GM12878 (cell line): ENCODE measurements at regions of chr2 and their contacts with region 1.

Region 1: GRCh38 chr2:111897924-111898702 is at the start of gene MERTK:
- DNase-seq: no peak
- ATAC-seq: peak; percentile 85
- H3K4me3 ChIP-seq: peak within 1 kb of the TSS; percentile 61; the same call in 1 of the 2 replicates
- H3K27ac ChIP-seq: no peak within 1 kb of the TSS
- H3K4me1 ChIP-seq: no peaks in the 10 kb centered on the region
- H3K27me3 ChIP-seq: peaks cover 2 to 7% of the 10 kb centered on the region in 2 experiments; a peak in 1 of 4 replicates
- CTCF ChIP-seq: peak; percentile 33 to 69 (median 40); a peak in 5 of 6 replicates
- EP300 ChIP-seq: no peak
- POLR2A ChIP-seq: no peak; the same call in 1 of the 2 replicates
- RAD21 ChIP-seq: peak; percentile 52
- polyA plus RNA-seq, gene MERTK: 0.26 to 0.37 TPM

Region 2: GRCh38 chr2:111883661-111884591 is 14.2 kb before region 1 on chr2 and contains the start of gene ANAPC1:
- CTCF ChIA-PET with region 1: interaction called, 93 read pairs
- POLR2A ChIA-PET with region 1: interaction called, 4 read pairs
- RAD21 ChIA-PET with region 1: interaction called, 12 read pairs
- SMC1A ChIA-PET with region 1: interaction called, 11 read pairs
- in situ Hi-C with region 1: no loop called
- intact Hi-C with region 1: no loop called
- DNase-seq: peak; percentile 67
- ATAC-seq: peak; percentile 95
- H3K4me3 ChIP-seq: peak within 1 kb of the TSS; percentile 97
- H3K27ac ChIP-seq: peak within 1 kb of the TSS; percentile 90
- H3K4me1 ChIP-seq: no peaks in the 10 kb centered on the region; the same call in 1 of the 2 replicates
- H3K27me3 ChIP-seq: no peaks in the 10 kb centered on the region
- CTCF ChIP-seq: no peak
- EP300 ChIP-seq: no peak
- POLR2A ChIP-seq: peak; percentile 98
- RAD21 ChIP-seq: no peak
- polyA plus RNA-seq, gene ANAPC1: 10.0 to 11.8 TPM

Region 3: DNA sequence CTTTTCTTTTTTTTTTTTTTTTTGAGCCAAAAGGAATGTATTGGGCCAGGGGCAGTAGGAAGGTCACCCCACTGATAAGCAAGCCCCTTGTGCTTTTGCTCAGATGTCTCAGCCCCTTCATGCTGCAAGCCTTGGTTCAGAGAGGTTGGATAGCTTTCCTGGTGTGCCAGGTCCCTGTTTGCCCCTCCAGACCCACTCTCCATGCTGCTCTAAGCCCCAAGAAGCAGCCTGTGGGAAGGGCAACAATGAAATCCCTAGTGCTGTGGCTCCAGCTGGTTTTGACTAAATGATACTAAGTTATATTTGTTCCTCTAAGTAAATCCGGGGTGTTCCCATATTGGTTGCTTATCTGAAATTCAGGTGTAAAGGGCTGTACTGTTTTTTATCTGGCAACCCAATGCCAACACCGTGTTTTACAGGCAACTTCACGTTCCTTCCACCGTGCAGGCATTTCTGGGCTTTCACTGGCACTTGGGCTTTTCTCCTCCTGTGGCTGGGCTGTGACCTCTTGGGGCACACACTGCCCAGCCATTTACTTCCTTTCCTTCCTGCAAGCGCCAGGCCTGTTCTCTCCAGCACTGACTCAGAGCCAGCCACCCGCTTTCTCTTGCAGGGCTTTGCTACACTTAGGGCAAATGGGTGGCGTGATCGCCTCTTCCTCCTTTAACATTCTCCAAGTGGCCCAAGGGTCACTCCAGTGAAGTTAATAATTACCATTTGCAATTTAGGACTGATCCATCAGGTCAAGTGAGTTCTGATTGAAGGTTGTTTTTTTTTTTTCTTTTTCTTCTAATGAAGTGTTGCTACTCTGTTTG is 21.9 kb after region 1 on chr2:
- CTCF ChIA-PET with region 1: interaction called, 33 read pairs
- POLR2A ChIA-PET with region 1: interaction called, 6 read pairs
- RAD21 ChIA-PET with region 1: interaction called, 9 read pairs
- SMC1A ChIA-PET with region 1: interaction called, 6 read pairs
- in situ Hi-C with region 1: no loop called
- intact Hi-C with region 1: no loop called
- DNase-seq: no peak
- ATAC-seq: 0 out of 3 replicates have a peak, but pooled peaks have one; percentile 25
- H3K4me3 ChIP-seq: no peak overlapping the region
- H3K27ac ChIP-seq: no peak overlapping the region
- H3K4me1 ChIP-seq: no peaks in the 10 kb centered on the region
- H3K27me3 ChIP-seq: no peaks in the 10 kb centered on the region; a peak in 1 of 4 replicates
- CTCF ChIP-seq: no peak
- EP300 ChIP-seq: no peak
- POLR2A ChIP-seq: no peak
- RAD21 ChIP-seq: no peak

Region 4: DNA sequence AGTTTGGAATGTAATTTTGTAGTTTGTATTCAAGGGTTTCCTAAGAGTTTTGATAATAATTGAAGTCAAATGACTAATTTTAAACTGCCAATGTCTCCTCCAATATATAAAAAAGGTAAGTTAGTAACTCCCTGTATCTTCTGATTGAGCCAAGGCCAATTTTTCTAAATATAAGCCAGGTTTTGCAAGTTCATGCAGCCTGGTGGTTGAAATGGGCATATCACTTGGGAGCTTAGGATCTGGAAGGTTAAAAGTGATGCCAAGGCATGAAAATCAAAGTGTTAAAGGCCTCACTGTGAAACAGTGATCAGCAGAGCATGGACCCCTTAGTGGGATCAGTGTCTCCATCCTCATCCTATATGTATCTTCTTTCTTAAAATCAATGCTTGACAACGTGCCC is 60.8 kb after region 1 on chr2:
- CTCF ChIA-PET with region 1: interaction called, 16 read pairs
- POLR2A ChIA-PET with region 1: interaction called, 3 read pairs
- RAD21 ChIA-PET with region 1: no interaction called
- SMC1A ChIA-PET with region 1: interaction called, 4 read pairs
- in situ Hi-C with region 1: no loop called
- intact Hi-C with region 1: no loop called
- DNase-seq: no peak
- ATAC-seq: no peak
- H3K4me3 ChIP-seq: no peak overlapping the region
- H3K27ac ChIP-seq: no peak overlapping the region
- H3K4me1 ChIP-seq: no peaks in the 10 kb centered on the region
- H3K27me3 ChIP-seq: no peaks in the 10 kb centered on the region; a peak in 1 of 4 replicates
- CTCF ChIP-seq: no peak
- EP300 ChIP-seq: no peak
- POLR2A ChIP-seq: no peak
- RAD21 ChIP-seq: no peak

Region 5: GRCh38 chr2:112004253-112004645 is 106.1 kb after region 1 on chr2:
- CTCF ChIA-PET with region 1: interaction called, 8 read pairs
- POLR2A ChIA-PET with region 1: interaction called, 5 read pairs
- RAD21 ChIA-PET with region 1: interaction called, 14 read pairs
- SMC1A ChIA-PET with region 1: interaction called, 13 read pairs
- in situ Hi-C with region 1: no loop called
- intact Hi-C with region 1: no loop called
- DNase-seq: peak; percentile 12
- ATAC-seq: peak; percentile 83
- H3K4me3 ChIP-seq: no peak overlapping the region
- H3K27ac ChIP-seq: no peak overlapping the region
- H3K4me1 ChIP-seq: peaks cover 15% of the 10 kb centered on the region
- H3K27me3 ChIP-seq: no peaks in the 10 kb centered on the region
- CTCF ChIP-seq: no peak
- EP300 ChIP-seq: no peak
- POLR2A ChIP-seq: no peak
- RAD21 ChIP-seq: no peak

Region 6: DNA sequence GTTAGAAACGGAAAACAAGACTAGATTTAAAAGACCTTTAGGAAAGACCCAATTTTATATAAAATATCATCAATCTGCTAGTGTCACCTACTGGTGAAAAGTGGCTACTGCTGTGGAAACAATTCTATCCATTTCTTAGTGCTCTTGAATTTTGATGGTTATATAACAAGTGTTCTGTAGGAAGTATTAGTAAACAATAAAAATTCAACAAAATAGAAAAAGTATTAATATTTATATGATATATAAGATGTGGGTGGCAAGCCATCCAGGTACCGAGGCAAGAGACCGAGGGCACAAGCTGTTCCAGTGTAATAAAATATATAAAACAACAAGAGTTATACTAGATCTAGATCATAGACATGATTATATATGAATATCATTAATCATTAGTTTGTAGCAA is 150.8 kb after region 1 on chr2:
- CTCF ChIA-PET with region 1: interaction called, 189 read pairs
- POLR2A ChIA-PET with region 1: interaction called, 4 read pairs
- RAD21 ChIA-PET with region 1: interaction called, 22 read pairs
- SMC1A ChIA-PET with region 1: interaction called, 62 read pairs
- in situ Hi-C with region 1: no loop called
- intact Hi-C with region 1: no loop called
- DNase-seq: no peak
- ATAC-seq: peak; percentile 91
- H3K4me3 ChIP-seq: no peak overlapping the region
- H3K27ac ChIP-seq: no peak overlapping the region
- H3K4me1 ChIP-seq: no peaks in the 10 kb centered on the region
- H3K27me3 ChIP-seq: no peaks in the 10 kb centered on the region
- CTCF ChIP-seq: peak; percentile 72 to 85 (median 73)
- EP300 ChIP-seq: no peak
- POLR2A ChIP-seq: no peak
- RAD21 ChIP-seq: peak; percentile 85

Region 7: GRCh38 chr2:112054847-112055729 is 157.0 kb after region 1 on chr2 and contains the start of gene TMEM87B:
- CTCF ChIA-PET with region 1: interaction called, 189 read pairs
- POLR2A ChIA-PET with region 1: interaction called, 8 read pairs
- RAD21 ChIA-PET with region 1: interaction called, 22 read pairs
- SMC1A ChIA-PET with region 1: interaction called, 62 read pairs
- in situ Hi-C with region 1: no loop called
- intact Hi-C with region 1: no loop called
- DNase-seq: peak; percentile 86
- ATAC-seq: peak; percentile 79
- H3K4me3 ChIP-seq: peak within 1 kb of the TSS; percentile 90
- H3K27ac ChIP-seq: peak within 1 kb of the TSS; percentile 64
- H3K4me1 ChIP-seq: peaks cover 5% of the 10 kb centered on the region
- H3K27me3 ChIP-seq: no peaks in the 10 kb centered on the region
- CTCF ChIP-seq: no peak
- EP300 ChIP-seq: 0 out of 4 replicates have a peak, but pooled peaks of 1 of the 2 experiments have one; percentile 32
- POLR2A ChIP-seq: peak; percentile 86
- RAD21 ChIP-seq: no peak
- polyA plus RNA-seq, gene TMEM87B: 5.7 to 8.2 TPM